ENCODE measurements at regions of chr15 and their contacts with region 1.

Region 1: DNA sequence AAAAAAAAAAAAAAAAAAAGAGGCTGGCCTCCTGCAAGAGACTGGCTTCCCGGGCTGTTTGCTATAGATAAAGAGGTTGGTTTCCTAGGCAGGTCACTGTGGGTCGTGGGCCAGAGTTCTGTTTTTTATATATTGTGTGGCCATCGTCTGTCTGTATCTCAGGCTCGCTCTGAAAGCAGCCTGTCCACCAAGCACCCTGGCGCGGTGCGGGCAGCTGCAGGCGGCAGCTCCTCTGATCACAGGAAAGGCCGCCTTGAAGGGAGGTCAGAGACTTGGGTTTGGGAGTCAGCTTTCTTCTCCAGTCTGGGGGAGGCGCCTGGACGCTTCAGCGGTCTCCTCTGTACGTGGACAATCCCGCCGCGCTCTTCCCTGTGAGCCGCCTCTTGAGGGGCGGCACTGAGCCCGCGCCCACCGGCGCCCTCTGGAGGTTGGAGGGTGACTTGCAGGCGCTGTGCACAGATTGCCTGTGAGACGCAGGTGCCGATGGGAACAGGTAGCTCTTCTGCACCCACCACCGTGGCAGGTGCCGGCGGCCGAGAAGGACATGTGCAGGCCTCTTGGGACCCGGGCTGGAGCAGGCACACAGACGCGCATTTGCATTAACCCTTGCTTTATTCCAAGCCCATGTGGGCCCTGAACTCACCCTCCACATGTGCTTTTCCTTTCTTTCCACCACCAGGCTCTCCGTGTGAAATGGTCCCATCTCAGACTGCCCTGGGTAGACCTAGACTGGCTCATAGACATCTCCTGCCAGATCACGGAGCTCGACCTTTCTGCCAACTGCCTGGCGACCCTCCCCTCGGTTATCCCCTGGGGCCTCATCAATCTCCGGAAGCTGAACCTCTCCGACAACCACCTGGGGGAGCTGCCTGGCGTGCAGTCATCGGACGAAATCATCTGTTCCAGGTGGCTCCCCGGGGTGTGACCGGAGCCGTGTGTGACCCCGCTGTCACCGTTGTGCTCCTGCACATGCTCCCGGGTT is 89.3 kb downstream of the LRRK1 start:
- DNase-seq: peak; percentile 91
- ATAC-seq: peak; percentile 99
- H3K4me3 Mint-ChIP-seq: peak overlapping the region; percentile 87
- H3K27ac Mint-ChIP-seq: no peak overlapping the region
- H3K4me1 Mint-ChIP-seq: peaks cover 21% of the 10 kb centered on the region
- H3K27me3 Mint-ChIP-seq: peaks cover 6% of the 10 kb centered on the region
- CTCF ChIP-seq: peak; percentile 96

Region 2: GRCh38 chr15:100349696-100350433 is 658.6 kb before region 1 on chr15:
- CTCF ChIA-PET with region 1: interaction called, 19 read pairs
- POLR2A ChIA-PET with region 1: no interaction called
- intact Hi-C with region 1: no loop called
- DNase-seq: peak; percentile 90
- ATAC-seq: peak; percentile 94
- H3K4me3 Mint-ChIP-seq: peak overlapping the region; percentile 85
- H3K27ac Mint-ChIP-seq: peak overlapping the region; percentile 92
- H3K4me1 Mint-ChIP-seq: peaks cover 5% of the 10 kb centered on the region
- H3K27me3 Mint-ChIP-seq: peaks cover 10% of the 10 kb centered on the region
- CTCF ChIP-seq: peak; percentile 96

Region 3: GRCh38 chr15:100902436-100903167 is 105.8 kb before region 1 on chr15:
- CTCF ChIA-PET with region 1: interaction called, 24 read pairs
- POLR2A ChIA-PET with region 1: no interaction called
- intact Hi-C with region 1: no loop called
- DNase-seq: no peak
- ATAC-seq: no peak
- H3K4me3 Mint-ChIP-seq: no peak overlapping the region
- H3K27ac Mint-ChIP-seq: no peak overlapping the region
- H3K4me1 Mint-ChIP-seq: no peaks in the 10 kb centered on the region
- H3K27me3 Mint-ChIP-seq: no peaks in the 10 kb centered on the region
- CTCF ChIP-seq: no peak

Region 4: DNA sequence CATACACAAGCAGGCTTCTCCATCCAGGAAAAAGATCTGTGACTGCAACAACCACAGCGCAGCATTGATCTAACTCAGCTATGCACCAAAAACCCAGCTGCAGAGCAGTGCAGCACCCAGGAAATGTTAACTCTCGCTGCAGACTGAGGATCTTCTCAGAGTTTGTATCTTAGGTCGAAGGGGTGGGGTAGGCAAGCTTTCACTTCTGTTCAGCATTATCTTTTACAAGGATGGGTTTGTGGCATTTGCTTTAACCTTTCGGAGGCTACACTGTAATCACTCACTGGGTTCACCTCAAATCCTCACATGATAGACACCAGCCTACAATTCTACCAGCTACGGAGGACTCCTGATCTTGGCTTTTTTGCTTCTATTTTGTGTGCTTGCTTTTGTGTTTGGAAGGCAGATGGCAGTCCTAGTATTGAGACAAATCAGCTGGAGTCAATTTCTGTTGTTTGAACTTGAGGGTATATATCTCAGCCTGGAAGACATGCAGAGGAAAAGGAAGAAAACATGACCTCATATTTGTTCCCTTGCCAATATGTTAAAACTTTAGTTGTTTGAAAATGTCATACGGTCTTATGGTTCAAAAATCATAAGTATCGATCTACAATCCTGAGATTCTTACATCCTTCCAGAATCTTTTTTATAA is 64.1 kb before region 1 on chr15:
- CTCF ChIA-PET with region 1: interaction called, 17 read pairs
- POLR2A ChIA-PET with region 1: no interaction called
- intact Hi-C with region 1: no loop called
- DNase-seq: no peak
- ATAC-seq: no peak
- H3K4me3 Mint-ChIP-seq: no peak overlapping the region
- H3K27ac Mint-ChIP-seq: no peak overlapping the region
- H3K4me1 Mint-ChIP-seq: no peaks in the 10 kb centered on the region
- H3K27me3 Mint-ChIP-seq: peaks cover 7% of the 10 kb centered on the region
- CTCF ChIP-seq: no peak

Region 5: GRCh38 chr15:101033801-101034200 is 25.4 kb after region 1 on chr15:
- CTCF ChIA-PET with region 1: interaction called, 13 read pairs
- POLR2A ChIA-PET with region 1: no interaction called
- intact Hi-C with region 1: no loop called
- DNase-seq: no peak
- ATAC-seq: no peak
- H3K4me3 Mint-ChIP-seq: no peak overlapping the region
- H3K27ac Mint-ChIP-seq: no peak overlapping the region
- H3K4me1 Mint-ChIP-seq: peaks cover 4% of the 10 kb centered on the region
- H3K27me3 Mint-ChIP-seq: peaks cover 31% of the 10 kb centered on the region
- CTCF ChIP-seq: no peak

Region 6: DNA sequence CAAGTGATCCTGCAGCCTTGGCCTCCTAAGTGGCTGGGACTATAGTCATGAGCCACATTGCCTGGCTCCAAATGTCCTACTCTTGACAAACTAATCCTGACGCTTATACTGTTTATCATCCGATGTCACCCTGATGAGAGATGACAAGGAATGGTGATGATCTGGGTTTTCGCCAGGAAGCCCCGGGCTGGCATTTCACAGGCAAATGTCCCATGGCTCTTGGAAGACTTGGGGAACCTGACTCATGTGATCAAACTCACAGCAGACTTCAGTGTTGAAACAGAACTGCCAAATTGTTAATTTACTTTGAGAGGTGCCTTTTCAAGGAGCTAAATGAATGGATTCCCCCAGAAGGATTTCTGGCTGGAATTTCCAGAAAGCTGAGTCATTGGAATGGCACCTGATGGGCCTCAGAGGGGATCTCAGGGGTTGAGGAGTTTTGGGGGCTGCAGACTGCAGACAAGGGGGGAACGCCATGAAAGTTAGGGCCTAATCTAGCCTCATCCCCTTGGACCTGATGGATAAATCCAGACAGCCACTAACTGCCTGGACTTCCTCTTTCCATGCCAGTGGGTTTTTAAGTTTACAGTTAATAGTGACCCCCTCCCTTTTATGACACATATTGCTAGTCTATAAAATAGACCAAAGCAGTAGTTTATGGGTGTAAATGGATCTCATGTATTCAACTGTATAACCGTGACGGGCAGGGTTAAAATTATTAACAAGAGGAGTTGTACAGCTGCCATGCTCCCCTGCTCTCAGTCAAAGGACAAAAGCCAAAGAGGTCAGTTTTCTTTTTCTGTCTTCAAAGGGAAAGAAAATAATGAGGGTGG is 96.8 kb after region 1 on chr15:
- CTCF ChIA-PET with region 1: no interaction called
- POLR2A ChIA-PET with region 1: no interaction called
- intact Hi-C with region 1: no loop called
- DNase-seq: no peak
- ATAC-seq: no peak
- H3K4me3 Mint-ChIP-seq: no peak overlapping the region
- H3K27ac Mint-ChIP-seq: no peak overlapping the region
- H3K4me1 Mint-ChIP-seq: no peaks in the 10 kb centered on the region
- H3K27me3 Mint-ChIP-seq: no peaks in the 10 kb centered on the region
- CTCF ChIP-seq: no peak

Region 7: DNA sequence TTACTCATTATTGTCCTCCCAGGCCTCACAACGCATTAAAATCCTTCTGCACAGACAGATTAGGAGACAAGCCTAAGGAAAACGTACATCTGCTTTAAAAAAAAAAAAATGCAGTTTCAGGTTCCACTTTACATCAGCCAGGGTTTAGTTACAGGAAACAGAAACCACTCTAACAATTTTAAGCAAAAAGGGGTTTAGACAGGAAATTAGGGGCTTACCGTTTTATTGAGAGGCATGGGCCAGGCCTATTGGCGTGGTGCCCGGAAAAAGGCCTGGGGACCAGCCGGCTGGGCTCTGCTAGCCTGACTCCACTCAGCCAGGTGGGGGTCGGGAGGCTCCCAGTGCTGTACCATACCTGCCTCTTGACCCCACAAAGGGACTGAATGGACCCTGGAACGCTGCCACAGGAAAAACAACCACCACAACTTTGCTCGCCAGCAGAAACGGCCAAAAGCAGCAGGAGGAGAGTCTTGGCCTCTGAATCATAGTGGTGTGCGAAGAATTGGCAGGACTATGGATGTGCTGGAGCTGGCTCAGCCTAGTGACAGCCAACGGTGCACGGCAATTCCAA is 119.1 kb after region 1 on chr15:
- CTCF ChIA-PET with region 1: interaction called, 10 read pairs
- POLR2A ChIA-PET with region 1: no interaction called
- intact Hi-C with region 1: no loop called
- DNase-seq: peak; percentile 75
- ATAC-seq: peak; percentile 71
- H3K4me3 Mint-ChIP-seq: peak overlapping the region; percentile 53
- H3K27ac Mint-ChIP-seq: peak overlapping the region; percentile 96
- H3K4me1 Mint-ChIP-seq: peaks cover 57% of the 10 kb centered on the region
- H3K27me3 Mint-ChIP-seq: no peaks in the 10 kb centered on the region
- CTCF ChIP-seq: no peak

Region 8: DNA sequence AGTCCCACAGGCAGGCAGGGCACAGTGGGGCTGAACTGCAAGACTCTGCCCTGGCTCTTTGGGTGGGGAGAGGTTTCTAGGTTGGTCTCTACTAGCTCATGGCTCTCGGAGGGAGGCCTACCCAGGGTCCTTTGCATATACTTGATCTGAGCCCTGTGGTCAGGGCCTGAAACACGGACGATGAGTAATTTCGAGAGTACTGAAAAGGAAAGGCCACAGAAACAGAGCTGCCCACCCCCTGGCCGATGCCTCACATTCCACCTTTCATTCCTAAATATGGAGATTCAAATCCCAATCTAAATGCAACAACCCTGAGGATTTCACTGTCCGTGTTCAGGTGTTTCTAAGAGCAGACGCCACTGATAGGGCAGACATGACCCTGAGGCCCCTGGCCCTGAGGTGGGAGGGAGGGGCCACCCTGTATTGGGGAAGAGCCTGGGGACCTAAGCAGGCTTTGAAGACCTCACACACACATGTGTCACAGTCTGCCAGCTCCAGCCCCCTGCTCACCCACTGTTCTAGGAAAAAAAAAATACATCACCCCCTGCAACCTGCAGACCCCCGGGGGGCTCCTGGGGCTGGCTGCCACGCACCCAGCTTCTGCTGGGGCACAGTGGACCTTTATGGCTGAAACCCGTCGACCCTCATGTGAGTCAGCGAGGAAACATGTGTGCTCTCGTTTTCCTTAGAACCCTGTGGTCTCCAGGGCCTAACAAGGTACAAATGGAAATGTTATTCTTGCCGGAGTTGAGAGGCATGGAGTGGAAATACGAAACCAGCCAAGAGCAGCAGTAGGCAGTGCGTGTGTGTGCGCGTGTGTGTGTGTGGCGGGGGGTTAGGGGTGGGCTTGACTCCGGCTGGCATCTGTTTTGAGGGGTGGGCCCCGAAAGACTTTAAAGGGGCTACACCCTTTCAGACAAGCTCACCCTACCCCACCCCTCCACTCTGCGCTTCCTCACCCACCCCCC is 130.7 kb after region 1 on chr15:
- CTCF ChIA-PET with region 1: no interaction called
- POLR2A ChIA-PET with region 1: no interaction called
- intact Hi-C with region 1: no loop called
- DNase-seq: no peak
- ATAC-seq: no peak
- H3K4me3 Mint-ChIP-seq: no peak overlapping the region
- H3K27ac Mint-ChIP-seq: no peak overlapping the region
- H3K4me1 Mint-ChIP-seq: peaks cover 24% of the 10 kb centered on the region
- H3K27me3 Mint-ChIP-seq: peaks cover 4% of the 10 kb centered on the region
- CTCF ChIP-seq: no peak